Prostate gland (tissue), 2 donors: ENCODE measurements at regions of chr6 and their contacts with region 1.

Region 1: DNA sequence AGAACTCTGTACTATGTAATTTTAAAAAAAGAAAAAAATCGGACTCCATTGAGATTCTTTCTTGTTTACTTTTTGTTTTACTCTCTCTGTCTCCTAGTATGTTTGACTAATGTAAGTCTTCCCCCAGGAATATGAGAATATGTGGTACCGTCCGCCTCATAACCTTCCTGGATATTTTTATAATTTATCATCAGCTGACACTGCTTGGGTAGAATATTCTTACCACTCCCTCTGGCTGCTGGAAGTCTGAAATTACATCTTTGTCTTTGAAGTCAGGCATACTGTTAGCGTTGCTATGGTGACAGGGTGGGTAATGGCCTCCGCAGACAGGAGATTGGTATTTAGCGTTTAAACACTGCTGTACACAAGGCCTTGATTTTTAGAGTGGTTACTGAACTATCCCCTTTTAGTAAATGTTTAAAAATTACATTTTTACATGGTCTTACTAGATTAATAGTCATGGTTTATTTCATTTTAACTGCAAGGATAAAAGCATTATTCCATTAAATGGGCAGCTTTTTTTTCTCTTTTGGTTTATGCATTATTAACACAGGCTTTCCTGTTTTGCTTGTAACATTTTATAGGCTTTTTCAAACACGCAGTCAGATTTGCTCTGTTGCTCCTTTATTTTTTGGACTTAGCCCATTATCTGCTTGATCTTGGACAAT is 176.4 kb downstream of the ARID1B start:
- DNase-seq: no peak
- H3K4me3 ChIP-seq: no peak overlapping the region
- H3K27ac ChIP-seq: no peak overlapping the region
- H3K4me1 ChIP-seq: peaks cover 21% of the 10 kb centered on the region
- H3K27me3 ChIP-seq: no peaks in the 10 kb centered on the region
- CTCF ChIP-seq: peak in 2 of 4 experiments; percentile 56 to 59
- POLR2A ChIP-seq: no peak

Region 2: DNA sequence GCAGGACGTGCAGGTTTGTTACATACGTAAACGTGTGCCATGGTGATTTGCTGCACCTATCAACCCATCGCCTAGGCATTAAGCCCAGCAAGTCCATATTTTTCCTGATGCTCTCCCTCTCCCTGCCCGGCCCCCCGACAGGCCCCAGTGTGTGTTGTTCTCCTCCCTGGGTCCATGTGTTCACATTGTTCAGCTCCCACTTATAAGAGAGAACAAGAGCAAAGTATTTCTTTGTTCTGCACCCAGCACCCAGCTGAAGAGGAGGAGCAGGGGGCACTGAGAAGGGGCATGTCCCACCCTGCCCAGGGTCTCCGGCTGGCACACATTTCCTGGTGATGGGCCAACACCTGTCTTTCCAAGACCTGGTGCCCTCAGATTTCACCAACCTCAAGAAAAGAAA is 427.5 kb before region 1 on chr6:
- intact Hi-C with region 1: no loop called
- DNase-seq: no peak
- H3K4me3 ChIP-seq: no peak overlapping the region
- H3K27ac ChIP-seq: no peak overlapping the region
- H3K4me1 ChIP-seq: no peaks in the 10 kb centered on the region
- H3K27me3 ChIP-seq: no peaks in the 10 kb centered on the region
- CTCF ChIP-seq: no peak
- POLR2A ChIP-seq: no peak

Region 3: DNA sequence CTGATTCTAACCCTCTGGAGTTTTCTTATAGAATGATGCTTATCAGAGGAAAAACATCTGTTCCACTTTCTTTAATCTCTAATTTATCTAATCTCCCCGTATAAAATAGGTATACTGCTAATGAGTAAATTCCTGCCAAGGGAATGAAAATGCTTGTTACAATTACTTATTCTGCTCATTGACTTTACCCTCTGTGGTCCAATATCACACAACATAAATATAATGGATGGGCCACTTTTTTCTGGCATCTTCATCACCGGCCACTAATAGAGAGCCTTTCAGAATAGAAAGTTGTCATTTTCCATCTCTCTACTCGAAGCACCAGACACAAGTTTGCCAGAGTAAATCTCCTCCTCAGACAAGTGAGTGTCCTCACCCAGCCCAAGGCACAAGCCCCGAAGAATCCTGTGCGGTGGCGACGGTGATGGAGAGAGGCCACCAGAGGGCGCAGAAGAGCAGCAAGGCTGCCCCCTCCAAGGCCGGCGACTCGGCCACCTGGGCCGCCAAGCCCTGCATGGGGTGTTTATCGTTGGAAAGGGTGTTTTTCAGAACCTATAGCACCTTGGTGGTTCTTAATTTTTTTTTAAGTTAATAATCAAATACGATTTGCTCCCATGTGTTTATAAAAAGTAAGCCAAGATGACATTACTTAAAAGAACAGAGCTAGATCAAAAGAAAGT is 389.3 kb before region 1 on chr6:
- intact Hi-C with region 1: loop called (anchors 5 kb)
- DNase-seq: peak; percentile 78
- H3K4me3 ChIP-seq: no peak overlapping the region
- H3K27ac ChIP-seq: no peak overlapping the region
- H3K4me1 ChIP-seq: no peaks in the 10 kb centered on the region
- H3K27me3 ChIP-seq: no peaks in the 10 kb centered on the region
- CTCF ChIP-seq: peak; percentile 87 to 93 (median 90)
- POLR2A ChIP-seq: no peak

Region 4: GRCh38 chr6:156795825-156796224 is 157.8 kb before region 1 on chr6:
- intact Hi-C with region 1: no loop called
- DNase-seq: no peak
- H3K4me3 ChIP-seq: peak overlapping the region in 1 of 2 donors; percentile 12
- H3K27ac ChIP-seq: no peak overlapping the region
- H3K4me1 ChIP-seq: no peaks in the 10 kb centered on the region
- H3K27me3 ChIP-seq: no peaks in the 10 kb centered on the region
- CTCF ChIP-seq: no peak
- POLR2A ChIP-seq: no peak

Region 5: DNA sequence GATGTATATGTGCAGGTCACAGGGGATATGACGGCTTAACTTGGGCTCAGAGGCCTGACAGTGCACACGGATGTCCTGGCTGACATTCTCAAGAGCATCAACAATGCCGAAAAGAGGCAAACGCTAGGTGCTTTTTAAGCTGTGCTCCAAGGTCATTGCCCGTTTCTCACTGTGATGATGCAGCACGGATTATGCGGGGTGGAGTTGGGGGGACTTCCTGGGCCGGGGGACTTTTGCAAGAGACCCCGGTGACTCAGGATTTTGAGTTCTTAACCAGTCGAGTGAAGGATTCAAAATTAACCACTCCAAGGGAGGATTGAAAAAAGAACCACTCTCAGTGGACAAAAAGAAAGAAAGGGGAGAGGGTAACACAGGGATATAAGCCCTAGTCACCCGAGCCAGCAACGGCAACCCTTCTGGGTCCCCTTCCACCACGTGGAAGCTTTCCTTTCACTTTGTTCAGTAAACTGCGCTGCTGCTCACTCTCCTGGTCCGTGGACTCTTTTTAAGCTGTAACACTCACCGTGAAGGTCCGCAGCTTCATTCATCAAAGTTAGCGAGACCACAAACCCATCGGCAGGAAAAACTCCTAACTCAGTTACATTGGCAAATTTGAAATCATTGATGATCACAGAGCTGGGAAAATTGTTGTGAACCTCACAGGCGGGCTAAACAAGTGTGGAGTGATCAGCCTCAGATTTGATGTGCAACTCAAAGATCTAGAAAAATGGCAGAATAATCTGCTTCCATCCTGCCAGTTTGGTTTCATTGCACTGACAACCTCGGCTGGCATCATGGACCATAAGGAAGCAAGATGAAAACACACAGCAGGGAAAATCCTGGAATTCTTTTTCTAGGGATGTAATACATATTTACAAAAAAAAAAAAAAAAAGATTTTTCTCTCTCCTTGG is 22.9 kb after region 1 on chr6:
- intact Hi-C with region 1: no loop called
- DNase-seq: no peak
- H3K4me3 ChIP-seq: no peak overlapping the region
- H3K27ac ChIP-seq: no peak overlapping the region
- H3K4me1 ChIP-seq: peaks cover 8% of the 10 kb centered on the region
- H3K27me3 ChIP-seq: no peaks in the 10 kb centered on the region
- CTCF ChIP-seq: no peak
- POLR2A ChIP-seq: no peak

Region 6: DNA sequence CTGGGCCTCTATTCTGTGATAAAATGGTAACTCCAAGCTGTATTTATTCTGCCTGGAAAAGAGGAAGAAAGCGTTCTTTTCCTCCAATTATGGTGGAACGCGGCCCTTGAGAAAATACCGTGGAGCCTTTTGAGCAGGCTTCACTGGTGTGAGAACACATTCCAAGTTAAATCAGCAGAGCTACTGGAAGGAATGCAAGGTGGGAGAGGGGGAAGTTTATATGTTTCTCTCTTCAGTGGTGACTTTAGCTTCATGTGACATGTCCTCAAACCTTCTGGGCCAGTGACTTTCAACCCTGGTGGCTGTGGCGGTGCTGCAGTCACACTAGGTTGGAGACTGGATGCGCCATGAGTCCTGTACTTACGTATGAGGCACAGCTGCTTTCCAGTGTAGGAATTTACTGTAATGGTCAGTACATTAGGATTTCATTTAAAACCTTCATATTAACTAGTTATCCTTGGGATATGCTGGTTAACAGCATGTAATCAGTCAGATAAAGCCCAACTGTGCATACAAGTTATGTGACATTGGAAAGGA is 45.2 kb after region 1 on chr6:
- intact Hi-C with region 1: no loop called
- DNase-seq: no peak
- H3K4me3 ChIP-seq: no peak overlapping the region
- H3K27ac ChIP-seq: no peak overlapping the region
- H3K4me1 ChIP-seq: no peaks in the 10 kb centered on the region
- H3K27me3 ChIP-seq: no peaks in the 10 kb centered on the region
- CTCF ChIP-seq: no peak
- POLR2A ChIP-seq: no peak

Region 7: GRCh38 chr6:157021344-157021992 is 67.9 kb after region 1 on chr6:
- intact Hi-C with region 1: loop called (anchors 5 kb)
- DNase-seq: peak; percentile 92
- H3K4me3 ChIP-seq: peak overlapping the region; percentile 80 to 84
- H3K27ac ChIP-seq: peak overlapping the region; percentile 99
- H3K4me1 ChIP-seq: peaks cover 4% of the 10 kb centered on the region
- H3K27me3 ChIP-seq: no peaks in the 10 kb centered on the region
- CTCF ChIP-seq: peak in 3 of 4 experiments; percentile 34 to 46 (median 44)
- POLR2A ChIP-seq: peak; percentile 98